BJ (cell line): ENCODE measurements at regions of chr17 and their contacts with region 1.

Region 1: DNA sequence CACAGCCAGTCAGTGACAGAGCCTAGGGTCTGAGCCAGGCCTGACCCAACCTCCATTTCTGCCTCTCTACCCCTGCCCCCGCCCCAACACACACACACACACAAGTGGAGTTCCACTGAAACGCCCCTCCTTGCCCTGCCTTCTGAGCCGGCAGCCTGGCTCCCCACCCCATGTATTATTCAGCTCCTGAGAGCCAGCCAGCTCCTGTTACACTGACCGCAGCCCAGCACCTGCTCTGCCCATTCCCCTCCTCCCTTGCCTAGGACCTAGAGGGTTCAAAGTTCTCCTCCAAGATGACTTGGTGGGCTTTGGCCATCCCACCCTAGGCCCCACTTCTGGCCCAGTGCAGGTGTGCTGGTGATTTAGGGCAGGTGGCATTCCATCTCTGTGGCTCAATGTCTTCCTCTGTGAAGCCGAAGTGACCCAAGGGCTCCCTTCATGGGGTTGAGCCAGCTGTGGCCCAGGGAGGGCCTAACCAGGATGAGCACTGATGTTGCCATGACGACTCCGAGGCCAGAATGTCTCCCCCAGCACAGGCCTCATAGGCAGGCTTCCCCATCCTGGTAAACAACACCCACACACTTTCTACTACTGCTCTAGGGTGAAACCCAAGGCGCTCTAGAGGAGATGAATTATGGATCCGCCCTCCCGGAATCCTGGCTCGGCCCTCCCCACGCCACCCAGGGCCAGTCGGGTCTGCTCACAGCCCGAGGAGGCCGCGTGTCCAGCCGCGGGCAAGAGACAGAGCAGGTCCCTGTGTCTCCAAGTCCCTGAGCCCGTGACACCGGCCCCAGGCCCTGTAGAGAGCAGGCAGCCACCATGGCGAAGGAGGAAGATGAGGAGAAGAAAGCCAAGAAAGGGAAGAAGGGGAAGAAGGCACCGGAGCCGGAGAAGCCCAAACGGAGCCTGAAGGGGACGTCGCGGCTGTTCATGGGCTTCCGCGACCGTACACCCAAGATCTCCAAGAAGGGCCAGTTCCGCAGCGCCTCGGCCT is 9.7 kb downstream of the MYO15A start:
- DNase-seq: no peak
- H3K4me3 ChIP-seq: no peak overlapping the region
- H3K27me3 ChIP-seq: no peaks in the 10 kb centered on the region
- CTCF ChIP-seq: no peak

Region 2: GRCh38 chr17:18087610-18088491 is 30.4 kb before region 1 on chr17 and contains the start of gene DRG2:
- CTCF ChIA-PET with region 1: no interaction called
- POLR2A ChIA-PET with region 1: interaction called, 10 read pairs
- DNase-seq: peak; percentile 41
- H3K4me3 ChIP-seq: peak within 1 kb of the TSS; percentile 86
- H3K27me3 ChIP-seq: no peaks in the 10 kb centered on the region
- CTCF ChIP-seq: peak; percentile 33
- polyA plus RNA-seq, gene DRG2: 28.8 and 36.4 TPM in 2 replicates